ENCODE measurements at regions of chr12 and their contacts with region 1.

Region 1: DNA sequence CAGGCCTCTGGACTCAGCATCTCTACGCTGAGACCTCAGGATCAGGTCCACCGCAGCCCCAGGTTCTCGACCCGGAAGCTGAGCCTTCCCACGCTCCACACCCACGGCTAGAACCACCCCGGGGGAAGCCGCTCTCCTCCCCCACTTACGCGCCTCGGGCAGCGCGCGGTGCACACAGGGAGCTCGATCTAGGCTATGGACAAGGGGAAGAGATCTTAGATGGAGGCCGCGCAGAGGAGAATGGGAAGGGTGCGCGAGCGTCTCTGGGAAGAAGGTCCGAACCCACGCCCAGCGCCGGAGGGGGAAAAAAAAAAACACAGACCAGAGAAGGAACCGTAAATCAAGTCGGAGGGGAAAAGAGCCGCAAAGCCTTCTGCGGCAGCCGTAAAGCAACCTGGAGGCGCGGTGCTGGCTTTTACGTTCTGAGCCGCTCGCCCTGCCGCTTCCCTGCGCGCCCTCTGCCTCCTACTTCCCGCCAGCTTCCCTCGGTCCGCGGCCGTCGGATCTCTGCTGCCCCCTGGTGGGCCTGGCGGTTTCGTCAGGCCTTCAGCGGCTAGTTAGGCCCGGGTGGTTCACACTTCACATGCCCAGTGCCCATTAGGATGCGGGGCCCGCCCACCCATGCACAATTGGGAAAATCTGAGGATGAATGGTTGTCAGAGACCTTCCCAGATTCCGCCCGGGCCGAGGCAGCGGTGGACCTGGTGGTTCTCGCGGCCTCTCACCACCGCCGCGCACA is at the start of gene RAD52:
- DNase-seq: peak; percentile 99
- ATAC-seq: peak; percentile 98
- total RNA-seq, gene RAD52: 7.1 TPM

Region 2: DNA sequence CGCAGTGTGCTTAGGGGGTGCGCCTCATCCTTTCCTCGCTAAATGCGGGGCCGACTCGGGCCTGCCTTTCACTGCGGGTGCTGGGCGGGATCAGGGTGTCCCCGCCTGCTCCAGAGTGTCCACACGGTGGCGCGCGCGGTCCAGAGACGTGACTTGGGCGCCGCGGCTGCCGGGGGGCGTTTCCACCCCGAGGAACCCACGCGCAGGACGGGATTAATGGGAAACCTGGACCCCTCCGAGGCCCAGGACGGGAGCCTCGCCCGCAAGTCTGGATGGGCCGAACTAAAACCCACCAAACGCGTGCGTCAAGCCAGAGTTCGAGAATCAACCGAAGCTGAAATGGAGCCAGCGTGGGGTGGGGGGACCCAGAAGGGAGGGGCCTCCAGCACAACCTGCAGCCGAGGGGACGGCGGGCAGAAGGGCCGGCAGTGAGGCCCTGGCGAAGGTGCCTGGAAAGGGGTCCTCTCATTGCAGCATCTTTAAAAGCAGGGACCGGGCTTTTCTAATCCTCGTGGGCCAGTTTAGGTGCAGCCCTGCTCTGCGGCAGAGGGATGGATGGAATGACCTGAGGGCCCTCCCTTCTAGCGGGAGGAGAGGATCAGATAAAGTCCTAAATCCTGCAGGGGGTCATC is 379.7 kb before region 1 on chr12:
- intact Hi-C with region 1: loop called (anchors 1 kb)
- DNase-seq: peak; percentile 96
- ATAC-seq: peak; percentile 75

Region 3: GRCh38 chr12:818733-819132 is 130.9 kb before region 1 on chr12:
- intact Hi-C with region 1: loop called (anchors 5 kb)
- DNase-seq: no peak
- ATAC-seq: no peak

Region 4: GRCh38 chr12:990661-991349 is 41.2 kb after region 1 on chr12 and contains the start of gene ERC1:
- intact Hi-C with region 1: loop called (anchors 1 kb)
- DNase-seq: peak; percentile 95
- ATAC-seq: peak; percentile 96
- total RNA-seq, gene ERC1: 43.1 TPM

Region 5: DNA sequence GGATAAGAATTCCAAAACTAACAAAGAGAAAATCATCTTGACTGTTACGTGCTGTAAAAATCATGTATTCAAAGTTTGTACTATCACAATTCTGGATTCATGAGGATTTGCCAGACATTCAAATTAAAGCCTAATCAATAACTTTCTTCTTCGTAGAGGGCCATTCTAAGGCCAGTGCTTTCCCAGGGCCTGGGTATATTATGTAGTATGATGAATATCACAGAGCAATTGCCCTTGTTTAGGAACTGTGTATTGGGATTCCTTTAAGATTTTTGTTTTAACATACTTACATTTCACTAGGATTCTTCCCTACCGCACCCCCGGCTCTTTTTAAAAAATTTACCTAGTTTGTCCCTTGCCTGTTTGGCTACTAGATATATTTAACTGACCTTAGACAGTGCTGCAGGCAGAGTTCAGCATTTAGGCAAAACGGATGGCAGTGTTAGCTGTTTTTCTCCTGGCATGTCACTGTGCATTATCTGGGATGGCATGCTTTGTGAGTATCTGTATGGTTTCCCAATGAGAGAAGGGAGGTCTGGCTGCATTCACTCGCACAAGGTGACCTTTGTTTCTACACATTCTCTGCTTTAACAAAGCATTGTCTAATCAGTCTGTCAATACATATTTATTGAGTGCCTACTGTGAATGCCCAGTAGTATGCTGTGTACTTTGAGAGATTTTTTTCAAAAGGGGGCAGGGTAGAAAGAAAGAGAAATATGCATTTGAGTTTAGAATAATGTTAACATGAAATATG is 104.7 kb after region 1 on chr12:
- intact Hi-C with region 1: no loop called
- DNase-seq: no peak
- ATAC-seq: peak; percentile 56

Region 6: GRCh38 chr12:1093166-1093751 is 143.6 kb after region 1 on chr12:
- intact Hi-C with region 1: loop called (anchors 10 kb)
- DNase-seq: no peak
- ATAC-seq: no peak